Tibial artery (tissue), 4 donors: ENCODE measurements at regions of chr2 and their contacts with region 1.

Region 1: GRCh38 chr2:166361351-166362153 is 14.2 kb downstream of the SCN9A start:
- DNase-seq: no peak
- H3K4me3 ChIP-seq: no peak overlapping the region
- H3K27ac ChIP-seq: no peak overlapping the region
- H3K4me1 ChIP-seq: no peaks in the 10 kb centered on the region
- H3K27me3 ChIP-seq: no peaks in the 10 kb centered on the region
- CTCF ChIP-seq: peak in 1 of 2 experiments; percentile 27

Region 2: DNA sequence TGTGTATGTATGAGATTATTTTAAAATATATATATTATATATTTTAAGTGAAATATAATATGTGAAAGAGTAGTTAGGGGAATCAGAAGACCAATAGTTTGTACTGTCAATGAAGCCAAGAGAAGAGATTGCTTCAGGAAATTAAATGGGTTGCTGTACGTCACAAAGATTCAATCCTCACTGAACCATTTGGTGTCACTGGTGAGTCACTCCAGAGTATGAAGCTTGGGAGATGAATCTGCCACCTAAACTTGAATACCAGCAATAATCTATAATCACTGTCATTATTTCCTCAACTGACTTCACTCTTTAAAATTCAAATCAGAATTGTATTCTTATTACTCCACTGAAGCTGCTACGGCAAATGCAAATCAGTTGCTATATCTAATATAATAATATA is 56.1 kb after region 1 on chr2:
- intact Hi-C with region 1: loop called (anchors 2 kb)
- DNase-seq: no peak
- H3K4me3 ChIP-seq: no peak overlapping the region
- H3K27ac ChIP-seq: no peak overlapping the region
- H3K4me1 ChIP-seq: no peaks in the 10 kb centered on the region
- H3K27me3 ChIP-seq: no peaks in the 10 kb centered on the region
- CTCF ChIP-seq: no peak